Activated CD4-positive, alpha-beta T cell treated with anti-CD3 and anti-CD28 coated beads for 36 hours (primary cell): ENCODE measurements at regions of chr3 and their contacts with region 1.

Region 1: GRCh38 chr3:195909644-195910508 is 1.5 kb upstream of the TNK2 start:
- DNase-seq: peak; percentile 94
- ATAC-seq: peak; percentile 67
- H3K4me3 Mint-ChIP-seq: peak overlapping the region; percentile 68
- H3K27ac Mint-ChIP-seq: peak overlapping the region; percentile 65
- H3K4me1 Mint-ChIP-seq: peaks cover 38% of the 10 kb centered on the region
- H3K27me3 Mint-ChIP-seq: no peaks in the 10 kb centered on the region

Region 2: DNA sequence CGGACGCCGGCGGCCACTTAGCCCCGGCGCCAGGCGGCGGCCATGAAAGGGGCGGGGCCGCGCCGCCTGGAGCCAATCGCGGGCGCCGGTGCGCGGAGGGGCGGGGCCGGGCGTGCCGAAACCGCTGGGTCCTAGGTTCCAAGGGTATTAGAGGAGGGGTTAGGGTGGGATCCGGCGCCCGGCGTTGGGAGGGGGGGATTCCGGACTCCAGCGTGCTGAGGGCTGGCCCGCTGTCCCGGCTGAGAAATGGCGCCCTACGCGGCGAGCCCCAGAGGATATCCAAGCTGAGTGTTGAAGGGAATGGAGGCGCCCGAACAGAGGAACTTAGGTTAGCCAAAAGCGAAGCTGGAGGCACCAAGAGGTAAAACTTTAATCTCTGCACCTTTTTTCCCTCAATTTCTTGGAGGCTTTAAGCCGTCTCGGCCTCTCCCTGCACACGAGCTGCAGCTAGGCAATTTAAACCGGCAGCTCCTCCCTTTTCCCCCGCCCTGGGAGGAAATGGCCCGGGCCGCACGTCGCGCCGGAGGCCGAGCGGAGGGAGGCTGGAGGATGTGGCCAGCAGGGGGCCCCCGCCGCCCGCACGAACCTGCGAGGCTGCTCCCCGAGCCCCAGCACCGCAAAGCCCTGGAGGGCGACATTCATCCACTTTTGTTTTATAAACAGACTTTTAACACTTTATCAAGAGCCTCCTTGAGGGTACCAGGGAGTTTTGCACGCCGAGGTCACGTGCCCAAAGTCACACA is 638.6 kb before region 1 on chr3 and contains the start of gene XXYLT1:
- CTCF ChIA-PET with region 1: no interaction called
- POLR2A ChIA-PET with region 1: no interaction called
- intact Hi-C with region 1: loop called in 1 of 2 experiments (anchors 2 kb)
- DNase-seq: peak; percentile 96
- ATAC-seq: peak; percentile 86
- H3K4me3 Mint-ChIP-seq: peak within 1 kb of the TSS; percentile 84
- H3K27ac Mint-ChIP-seq: peak within 1 kb of the TSS; percentile 87
- H3K4me1 Mint-ChIP-seq: peaks cover 17% of the 10 kb centered on the region
- H3K27me3 Mint-ChIP-seq: no peaks in the 10 kb centered on the region
- total RNA-seq, gene XXYLT1: 5.4 to 5.7 TPM

Region 3: GRCh38 chr3:195542698-195543499 is 367.0 kb before region 1 on chr3 and contains the start of gene PPP1R2:
- CTCF ChIA-PET with region 1: no interaction called
- POLR2A ChIA-PET with region 1: interaction called, 5 read pairs
- intact Hi-C with region 1: loop called (anchors 2 to 5 kb)
- DNase-seq: peak; percentile 97
- ATAC-seq: peak; percentile 72
- H3K4me3 Mint-ChIP-seq: peak within 1 kb of the TSS; percentile 95
- H3K27ac Mint-ChIP-seq: peak within 1 kb of the TSS; percentile 95
- H3K4me1 Mint-ChIP-seq: peaks cover 65% of the 10 kb centered on the region
- H3K27me3 Mint-ChIP-seq: no peaks in the 10 kb centered on the region
- total RNA-seq, gene PPP1R2: 77.0 to 134 TPM

Region 4: DNA sequence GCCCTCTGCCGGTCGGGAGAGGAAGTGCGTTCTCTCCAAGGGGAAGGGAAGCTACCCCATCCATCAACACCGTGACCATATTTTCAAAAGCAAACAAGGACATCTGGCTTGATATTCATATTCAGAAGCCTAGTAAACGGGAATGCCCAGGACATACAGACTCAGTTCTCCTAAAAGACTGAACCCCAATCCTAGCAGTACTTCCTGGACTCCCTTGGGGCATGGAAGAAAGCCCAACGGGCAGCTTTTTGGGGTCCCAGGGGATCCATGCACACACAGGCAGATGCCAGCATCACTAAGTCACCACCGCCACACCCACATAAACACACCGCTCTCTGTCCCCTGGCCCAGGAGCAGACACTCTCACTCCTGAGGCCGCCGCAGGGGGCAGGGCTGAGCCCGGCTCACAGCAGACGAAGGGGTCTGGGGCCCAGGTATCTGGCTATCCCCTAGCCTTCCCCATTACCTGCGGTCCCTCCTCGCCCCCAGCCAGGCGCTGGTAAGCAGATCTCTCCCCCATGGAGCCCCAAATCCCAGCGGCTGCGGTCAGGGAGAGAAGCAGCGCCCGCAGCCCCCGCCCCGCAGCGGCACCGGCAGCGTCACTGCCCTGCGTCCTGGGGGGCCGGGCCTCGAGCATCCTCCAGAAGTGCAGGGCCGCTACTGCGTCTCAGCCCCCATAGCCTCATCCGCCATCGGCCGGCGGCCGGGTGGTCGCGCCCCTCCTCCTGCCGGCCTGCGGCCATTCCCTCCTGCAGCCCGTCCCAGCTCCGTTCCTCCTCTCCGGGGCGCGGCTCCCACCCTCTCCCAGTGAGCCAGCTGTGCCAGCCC is 14.9 kb before region 1 on chr3:
- CTCF ChIA-PET with region 1: interaction called, 70 read pairs
- POLR2A ChIA-PET with region 1: interaction called, 28 read pairs
- intact Hi-C with region 1: loop called (anchors 1 kb)
- DNase-seq: peak; percentile 86
- ATAC-seq: peak; percentile 79
- H3K4me3 Mint-ChIP-seq: peak overlapping the region; percentile 83
- H3K27ac Mint-ChIP-seq: peak overlapping the region; percentile 88
- H3K4me1 Mint-ChIP-seq: peaks cover 42% of the 10 kb centered on the region
- H3K27me3 Mint-ChIP-seq: no peaks in the 10 kb centered on the region

Region 5: GRCh38 chr3:196081791-196082618 is 172.1 kb after region 1 on chr3 and contains the start of gene TFRC:
- CTCF ChIA-PET with region 1: interaction called, 4 read pairs
- POLR2A ChIA-PET with region 1: no interaction called
- intact Hi-C with region 1: loop called in 1 of 2 experiments (anchors 5 kb)
- DNase-seq: peak; percentile 98
- ATAC-seq: peak; percentile 92
- H3K4me3 Mint-ChIP-seq: peak within 1 kb of the TSS; percentile 95
- H3K27ac Mint-ChIP-seq: peak within 1 kb of the TSS; percentile 93
- H3K4me1 Mint-ChIP-seq: peaks cover 30% of the 10 kb centered on the region
- H3K27me3 Mint-ChIP-seq: no peaks in the 10 kb centered on the region
- total RNA-seq, gene TFRC: 373 to 520 TPM

Region 6: GRCh38 chr3:196207833-196208607 is 298.1 kb after region 1 on chr3:
- CTCF ChIA-PET with region 1: no interaction called
- POLR2A ChIA-PET with region 1: no interaction called
- intact Hi-C with region 1: loop called in 1 of 2 experiments (anchors 2 kb)
- DNase-seq: peak; percentile 86
- ATAC-seq: peak; percentile 77
- H3K4me3 Mint-ChIP-seq: peak overlapping the region; percentile 74
- H3K27ac Mint-ChIP-seq: peak overlapping the region; percentile 29
- H3K4me1 Mint-ChIP-seq: peaks cover 11% of the 10 kb centered on the region
- H3K27me3 Mint-ChIP-seq: no peaks in the 10 kb centered on the region

Region 7: DNA sequence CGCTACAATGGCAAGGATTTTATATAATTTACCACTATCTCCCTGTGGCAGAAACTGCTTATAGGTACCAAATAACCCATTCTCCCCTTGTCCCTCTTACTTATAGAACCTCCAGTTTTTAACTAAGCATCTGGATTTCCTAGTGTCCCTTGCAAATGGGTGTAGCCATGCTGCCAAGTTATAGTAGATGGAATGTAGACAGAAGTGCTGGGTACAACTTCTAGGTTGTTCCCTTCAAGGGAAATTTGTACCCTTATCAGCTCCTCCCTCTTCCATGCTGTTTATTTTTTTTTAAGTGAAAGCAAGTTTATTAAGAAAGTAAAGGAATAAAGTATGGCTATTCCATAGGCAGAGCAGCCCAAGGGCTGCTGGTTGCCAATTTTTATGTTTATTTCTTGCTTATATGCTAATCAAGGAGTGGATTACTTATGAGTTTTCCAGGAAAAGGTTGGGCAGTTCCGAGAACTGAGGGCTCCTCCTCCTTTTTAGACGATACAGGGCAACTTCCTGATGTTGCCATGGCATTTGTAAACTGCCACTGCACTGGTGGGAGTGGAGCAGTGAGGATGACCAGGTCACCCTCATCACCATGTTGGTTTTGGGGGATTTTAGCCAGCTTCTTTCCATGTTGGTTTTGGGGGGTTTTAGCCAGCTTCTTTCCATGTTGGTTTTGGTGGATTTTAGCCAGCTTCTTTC is 468.4 kb after region 1 on chr3:
- CTCF ChIA-PET with region 1: no interaction called
- POLR2A ChIA-PET with region 1: no interaction called
- intact Hi-C with region 1: no loop called
- DNase-seq: peak; percentile 33
- ATAC-seq: no peak
- H3K4me3 Mint-ChIP-seq: no peak overlapping the region
- H3K27ac Mint-ChIP-seq: no peak overlapping the region
- H3K4me1 Mint-ChIP-seq: peaks cover 3% of the 10 kb centered on the region
- H3K27me3 Mint-ChIP-seq: no peaks in the 10 kb centered on the region

Region 8: GRCh38 chr3:196632046-196632751 is 722.3 kb after region 1 on chr3:
- CTCF ChIA-PET with region 1: no interaction called
- POLR2A ChIA-PET with region 1: no interaction called
- intact Hi-C with region 1: loop called in 1 of 2 experiments (anchors 5 kb)
- DNase-seq: peak; percentile 93
- ATAC-seq: peak; percentile 80
- H3K4me3 Mint-ChIP-seq: peak overlapping the region; percentile 81
- H3K27ac Mint-ChIP-seq: peak overlapping the region; percentile 95
- H3K4me1 Mint-ChIP-seq: peaks cover 55% of the 10 kb centered on the region
- H3K27me3 Mint-ChIP-seq: no peaks in the 10 kb centered on the region